Left lung (tissue), 14 donors: ENCODE measurements at regions of chr4 and their contacts with region 1.

Region 1: GRCh38 chr4:144174401-144175067 is 34.0 kb upstream of the GYPA start:
- DNase-seq: peak in 2 of 4 donors; percentile 53 to 68
- ATAC-seq: peak; percentile 93
- H3K4me3 ChIP-seq: no peak overlapping the region
- H3K27ac ChIP-seq: no peak overlapping the region
- H3K4me1 ChIP-seq: no peaks in the 10 kb centered on the region
- H3K27me3 ChIP-seq: peaks cover 0 to 3% of the 10 kb centered on the region in 2 donors
- CTCF ChIP-seq: peak; percentile 30 to 34

Region 2: DNA sequence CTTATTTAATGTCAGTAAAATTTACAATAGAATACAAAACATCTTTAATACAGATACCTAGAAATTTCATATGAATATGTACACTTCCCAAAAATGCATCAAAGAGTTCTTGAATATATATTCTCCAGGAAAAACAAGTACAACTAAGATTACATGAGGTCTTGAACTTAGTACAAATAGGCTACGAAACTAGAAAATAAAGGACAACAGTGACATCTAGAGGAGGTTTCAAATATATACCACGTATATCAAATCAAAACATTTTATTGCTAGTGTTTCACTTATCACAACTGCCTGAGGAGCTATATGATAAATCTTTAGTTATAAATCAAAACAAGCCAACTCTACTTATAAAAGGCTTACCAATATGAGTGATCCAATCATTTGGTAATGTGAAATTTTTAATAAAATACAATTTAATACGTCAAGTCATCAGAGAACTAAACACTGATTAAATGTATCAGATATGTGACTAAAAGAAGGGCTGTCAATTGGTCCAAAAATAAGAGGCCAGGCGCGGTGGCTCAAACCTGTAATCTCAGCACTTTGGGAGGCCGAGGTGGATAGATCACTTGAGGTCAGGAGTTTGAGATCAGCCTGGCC is 886.9 kb after region 1 on chr4:
- intact Hi-C with region 1: loop called in 1 of 2 experiments (anchors 10 kb)
- DNase-seq: peak in 2 of 4 donors; percentile 46 to 62
- ATAC-seq: peak; percentile 86
- H3K4me3 ChIP-seq: no peak overlapping the region
- H3K27ac ChIP-seq: no peak overlapping the region
- H3K4me1 ChIP-seq: peaks cover 0 to 5% of the 10 kb centered on the region in 2 donors
- H3K27me3 ChIP-seq: no peaks in the 10 kb centered on the region
- CTCF ChIP-seq: peak; percentile 33 to 47